ENCODE measurements at regions of chr1 and their contacts with region 1.

Region 1: GRCh38 chr1:18681423-18681835 is 50.8 kb downstream of the PAX7 start:
- DNase-seq: peak in 4 of 5 donors; percentile 3 to 19 (median 6)
- H3K4me3 ChIP-seq: no peak overlapping the region
- H3K4me3 Mint-ChIP-seq: no peak overlapping the region
- H3K27ac ChIP-seq: no peak overlapping the region
- H3K27ac Mint-ChIP-seq: no peak overlapping the region
- H3K4me1 ChIP-seq: no peaks in the 10 kb centered on the region
- H3K4me1 Mint-ChIP-seq: peaks cover 0 to 1% (median 0%) of the 10 kb centered on the region in 4 donors
- H3K27me3 ChIP-seq: no peaks in the 10 kb centered on the region
- H3K27me3 Mint-ChIP-seq: peaks cover 17 to 18% of the 10 kb centered on the region in 2 donors

Region 2: DNA sequence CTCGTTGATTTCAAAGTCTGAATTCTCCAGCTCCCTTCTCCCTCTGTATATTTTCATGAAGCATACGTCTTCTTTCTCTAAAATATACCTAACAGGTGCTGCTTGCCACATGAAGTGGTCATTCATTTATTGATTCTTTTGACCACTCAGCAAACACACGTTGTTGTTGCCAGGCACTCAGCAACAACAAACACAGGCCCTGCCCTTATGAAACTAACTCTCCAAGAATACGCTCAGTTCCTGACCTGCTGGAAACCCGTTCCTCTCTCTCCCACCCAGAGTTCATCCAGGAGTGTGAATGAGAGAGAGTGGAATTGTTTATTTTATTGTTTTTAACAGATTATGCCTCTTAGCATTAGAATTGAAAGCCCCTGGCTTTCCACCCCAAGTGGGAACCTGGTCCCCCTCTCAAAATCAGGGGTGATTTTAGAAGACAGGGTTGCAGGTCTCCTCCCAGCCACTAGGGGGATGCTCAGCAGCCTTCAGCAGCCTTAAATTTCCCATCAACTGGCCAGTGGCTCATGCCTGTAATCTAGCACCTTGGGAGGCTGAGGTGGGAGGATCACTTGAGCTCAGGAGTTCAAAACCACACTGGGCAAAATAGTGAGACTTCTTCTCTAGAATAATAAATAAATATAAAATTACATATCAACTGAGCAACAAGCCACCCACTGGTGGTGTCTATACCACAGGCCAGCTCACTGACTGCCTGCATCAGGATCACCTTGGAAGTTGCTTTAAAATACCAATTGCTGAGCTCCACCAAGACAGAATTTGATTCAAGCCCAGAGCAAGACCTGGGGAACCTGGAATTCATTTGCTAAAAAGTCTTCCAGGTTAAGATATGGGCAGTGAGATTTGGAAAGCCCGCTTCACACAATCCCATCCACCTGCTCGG is 381.7 kb before region 1 on chr1:
- CTCF ChIA-PET with region 1: no interaction called
- POLR2A ChIA-PET with region 1: no interaction called
- intact Hi-C with region 1: loop called (anchors 5 kb)
- DNase-seq: peak in 2 of 5 donors; percentile 1 to 9
- H3K4me3 ChIP-seq: no peak overlapping the region
- H3K4me3 Mint-ChIP-seq: no peak overlapping the region
- H3K27ac ChIP-seq: no peak overlapping the region
- H3K27ac Mint-ChIP-seq: no peak overlapping the region
- H3K4me1 ChIP-seq: no peaks in the 10 kb centered on the region
- H3K4me1 Mint-ChIP-seq: no peaks in the 10 kb centered on the region
- H3K27me3 ChIP-seq: no peaks in the 10 kb centered on the region
- H3K27me3 Mint-ChIP-seq: peaks cover 12 to 22% of the 10 kb centered on the region in 2 donors

Region 3: DNA sequence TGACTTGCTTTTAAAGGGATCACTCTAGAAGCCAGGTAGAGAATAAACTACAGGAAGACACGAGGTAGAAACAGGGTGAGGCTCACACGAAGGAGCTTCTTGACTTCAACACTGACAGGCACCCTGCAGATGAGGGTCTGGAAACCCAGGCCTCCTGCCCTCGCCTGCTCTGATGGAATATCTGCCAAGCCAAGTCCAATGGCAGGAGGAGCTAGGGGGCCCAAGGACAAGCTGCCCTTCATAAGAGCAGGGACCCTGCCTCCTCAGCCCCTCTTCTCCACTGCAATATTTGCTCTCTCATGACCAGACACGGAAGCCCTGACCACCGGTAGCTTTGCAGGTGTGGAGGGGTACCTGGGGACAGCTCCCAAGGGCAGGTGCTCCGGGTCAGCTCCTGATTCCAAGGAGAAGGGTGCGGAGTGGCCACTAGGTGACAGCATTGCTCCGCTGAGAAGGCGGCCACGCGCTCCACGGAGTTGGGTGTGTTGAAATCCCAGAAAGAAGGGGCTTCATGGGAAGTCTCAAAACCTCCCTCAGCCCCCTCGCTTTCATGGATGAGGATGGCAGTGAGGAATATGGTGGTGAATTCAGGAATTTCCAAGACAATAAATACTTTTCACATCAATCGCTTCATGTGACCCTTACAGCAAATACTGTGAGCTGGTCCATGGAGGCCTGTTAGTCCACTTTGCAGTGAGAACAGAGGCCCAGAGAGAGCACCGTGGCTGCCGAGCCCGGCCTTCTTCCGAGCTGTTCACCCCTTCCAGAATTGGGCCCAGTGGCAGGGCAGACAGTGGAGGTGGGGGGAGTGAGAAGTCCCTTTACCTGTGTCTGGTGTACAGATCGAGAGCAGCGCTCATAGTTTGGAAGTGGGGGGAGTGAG is 84.0 kb before region 1 on chr1:
- CTCF ChIA-PET with region 1: interaction called, 51 read pairs
- POLR2A ChIA-PET with region 1: no interaction called
- intact Hi-C with region 1: no loop called
- DNase-seq: peak in 4 of 5 donors; percentile 25 to 36 (median 30)
- H3K4me3 ChIP-seq: no peak overlapping the region
- H3K4me3 Mint-ChIP-seq: no peak overlapping the region
- H3K27ac ChIP-seq: no peak overlapping the region
- H3K27ac Mint-ChIP-seq: no peak overlapping the region
- H3K4me1 ChIP-seq: no peaks in the 10 kb centered on the region
- H3K4me1 Mint-ChIP-seq: no peaks in the 10 kb centered on the region
- H3K27me3 ChIP-seq: peaks cover 3% of the 10 kb centered on the region
- H3K27me3 Mint-ChIP-seq: peaks cover 13 to 29% of the 10 kb centered on the region in 2 donors

Measured in CD4-positive, alpha-beta memory T cell (primary cell).